Activated T-helper 1 cell treated with anti-CD3 and anti-CD28 coated beads, Interleukin-12 subunit alpha, Interleukin-12 subunit beta, Interleukin-2, Interleukin-4 antibody, amounts not matched to agents 30 ng/mL and 10 ng/mL and 1 ng/mL, durations not matched to agents 14 hours and 24 hours and 36 hours (primary cell): ENCODE measurements at regions of chr9 and their contacts with region 1.

Region 1: DNA sequence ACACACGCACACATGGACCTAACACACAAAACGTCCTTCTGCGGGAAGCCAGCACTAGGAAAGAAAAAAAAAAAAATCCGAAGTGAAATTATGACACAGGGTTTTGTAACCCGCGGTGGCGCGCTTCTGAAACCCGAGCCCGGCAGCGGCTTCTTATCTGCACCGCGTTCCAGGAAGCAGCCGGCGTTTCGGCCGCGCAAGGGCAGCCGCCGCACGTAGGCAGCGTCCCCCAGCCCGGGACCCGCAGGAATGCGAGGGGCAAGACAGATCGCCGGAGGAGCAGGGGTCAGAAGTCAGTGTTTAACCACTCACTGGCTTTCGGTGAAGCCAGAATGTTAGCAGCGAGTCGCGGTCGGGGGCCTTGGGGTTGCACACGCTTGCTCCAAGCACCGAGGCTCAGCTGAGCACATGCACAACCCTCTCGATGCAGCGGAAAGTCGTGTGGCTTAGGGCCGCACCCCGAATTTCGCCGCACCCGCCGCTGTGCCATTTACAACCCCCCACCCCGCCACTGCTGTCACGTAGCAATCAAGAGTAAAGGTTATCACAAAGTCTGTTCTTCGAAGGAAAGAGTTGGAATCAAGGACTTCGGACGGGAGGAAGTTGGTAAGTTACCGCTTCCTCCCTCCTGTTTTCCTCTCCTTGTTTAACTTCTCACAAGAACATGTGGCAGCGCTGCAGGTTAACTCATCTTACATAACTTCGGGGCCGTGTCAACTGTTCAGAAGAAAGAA is 167.9 kb downstream of the AUH start:
- DNase-seq: peak; percentile 77
- H3K4me3 Mint-ChIP-seq: peak overlapping the region; percentile 71
- H3K27ac Mint-ChIP-seq: peak overlapping the region; percentile 95
- H3K4me1 Mint-ChIP-seq: peaks cover 80% of the 10 kb centered on the region
- H3K27me3 Mint-ChIP-seq: no peaks in the 10 kb centered on the region

Region 2: GRCh38 chr9:90827181-90827871 is 366.5 kb before region 1 on chr9:
- intact Hi-C with region 1: no loop called
- DNase-seq: no peak
- H3K4me3 Mint-ChIP-seq: no peak overlapping the region
- H3K27ac Mint-ChIP-seq: no peak overlapping the region
- H3K4me1 Mint-ChIP-seq: no peaks in the 10 kb centered on the region
- H3K27me3 Mint-ChIP-seq: peaks cover 17% of the 10 kb centered on the region

Region 3: DNA sequence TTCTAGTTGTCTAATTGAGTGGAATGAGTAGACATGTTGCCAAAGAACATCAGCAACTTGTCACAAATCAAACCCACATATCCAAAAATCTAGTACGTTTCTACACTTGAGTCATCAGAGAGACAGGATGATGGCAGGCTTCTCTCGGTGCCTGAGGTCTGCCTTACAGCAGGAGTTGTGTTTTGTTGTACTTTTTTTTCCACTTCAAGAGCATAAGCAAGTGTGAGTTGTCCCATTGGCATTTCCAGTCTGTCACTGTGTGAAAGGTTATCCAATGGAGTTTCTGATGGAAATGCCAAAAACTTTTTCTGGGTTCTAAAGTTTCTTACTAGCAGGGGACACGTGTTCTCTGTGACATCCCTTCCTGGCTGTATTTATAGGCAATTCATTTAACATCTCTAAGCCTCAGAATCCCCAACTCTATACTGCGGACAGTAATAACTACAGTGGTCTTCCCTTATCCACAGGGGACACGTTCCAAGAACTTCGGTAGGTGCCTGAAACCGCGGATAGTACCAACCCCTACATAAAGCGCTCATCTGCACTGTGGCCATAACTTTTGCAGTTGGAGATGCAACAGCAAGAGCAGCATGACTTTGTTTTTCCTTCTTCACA is 145.7 kb before region 1 on chr9:
- intact Hi-C with region 1: loop called (anchors 1 kb)
- DNase-seq: peak; percentile 31
- H3K4me3 Mint-ChIP-seq: peak overlapping the region; percentile 65
- H3K27ac Mint-ChIP-seq: peak overlapping the region; percentile 92
- H3K4me1 Mint-ChIP-seq: peaks cover 67% of the 10 kb centered on the region
- H3K27me3 Mint-ChIP-seq: peaks cover 4% of the 10 kb centered on the region

Region 4: DNA sequence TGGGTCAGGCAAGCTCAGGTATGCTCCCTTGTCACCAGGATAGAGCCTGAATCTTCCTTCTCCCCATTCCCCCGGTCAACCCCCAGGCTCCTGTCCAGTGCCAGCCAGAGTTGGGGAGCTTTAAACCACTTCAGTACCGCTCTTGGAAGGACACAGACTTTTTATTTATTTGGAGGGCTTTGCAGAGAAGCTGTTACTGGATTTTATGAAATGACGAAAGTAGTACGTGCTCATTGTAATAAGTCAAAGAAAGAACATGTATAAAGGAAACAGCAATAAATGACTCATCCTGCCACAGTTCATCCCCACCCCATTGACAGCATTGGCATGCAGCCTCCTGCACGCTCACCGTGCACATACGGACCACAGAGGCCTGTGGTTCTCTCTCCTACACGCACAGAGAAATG is 62.4 kb before region 1 on chr9:
- intact Hi-C with region 1: loop called (anchors 1 kb)
- DNase-seq: peak; percentile 70
- H3K4me3 Mint-ChIP-seq: peak overlapping the region; percentile 63
- H3K27ac Mint-ChIP-seq: peak overlapping the region; percentile 96
- H3K4me1 Mint-ChIP-seq: peaks cover 42% of the 10 kb centered on the region
- H3K27me3 Mint-ChIP-seq: no peaks in the 10 kb centered on the region

Region 5: GRCh38 chr9:91207729-91208418 is 14.0 kb after region 1 on chr9:
- intact Hi-C with region 1: loop called (anchors 1 kb)
- DNase-seq: no peak
- H3K4me3 Mint-ChIP-seq: peak overlapping the region; percentile 68
- H3K27ac Mint-ChIP-seq: peak overlapping the region; percentile 95
- H3K4me1 Mint-ChIP-seq: peaks cover 59% of the 10 kb centered on the region
- H3K27me3 Mint-ChIP-seq: no peaks in the 10 kb centered on the region

Region 6: GRCh38 chr9:91334053-91334452 is 140.2 kb after region 1 on chr9:
- intact Hi-C with region 1: no loop called
- DNase-seq: no peak
- H3K4me3 Mint-ChIP-seq: no peak overlapping the region
- H3K27ac Mint-ChIP-seq: no peak overlapping the region
- H3K4me1 Mint-ChIP-seq: no peaks in the 10 kb centered on the region
- H3K27me3 Mint-ChIP-seq: no peaks in the 10 kb centered on the region

Region 7: DNA sequence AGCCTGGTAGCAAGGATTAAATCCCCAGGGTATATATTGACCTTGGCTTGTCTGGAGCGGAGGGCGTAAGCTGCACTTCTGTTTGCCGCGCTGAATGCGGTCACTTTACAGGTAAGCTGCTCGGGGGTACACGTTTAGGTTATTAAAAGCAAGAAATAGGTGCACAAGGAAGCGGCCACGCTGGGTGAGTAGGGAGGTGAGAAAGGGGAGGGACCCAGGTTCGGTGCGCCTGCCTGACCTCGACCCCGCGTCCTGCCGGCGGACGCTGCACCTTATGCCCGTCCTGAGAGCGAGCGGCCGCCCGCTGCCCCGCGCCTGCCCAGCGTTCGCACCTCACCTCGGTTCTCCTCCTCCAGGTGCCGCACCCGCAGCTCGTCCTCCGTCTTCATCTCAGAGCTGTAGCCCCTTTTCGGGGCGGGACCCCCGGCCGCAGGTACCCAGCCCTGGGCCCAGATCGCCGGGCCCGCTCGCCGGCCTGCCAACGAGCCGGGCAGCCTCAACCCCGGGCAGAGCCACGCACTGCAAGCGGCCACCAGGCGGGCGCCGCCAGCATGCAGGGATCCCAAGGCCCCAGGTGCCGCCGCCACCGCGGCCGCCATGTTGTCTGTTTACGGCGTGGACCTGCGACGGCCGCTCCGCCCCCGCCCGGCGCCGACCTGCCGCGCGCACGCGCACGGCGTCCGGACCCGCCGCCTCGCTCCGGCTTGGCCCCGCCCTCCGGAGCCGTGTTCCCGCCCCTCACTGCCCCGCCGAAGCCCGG is 167.6 kb after region 1 on chr9 and contains the start of gene AUH:
- intact Hi-C with region 1: loop called (anchors 1 kb)
- DNase-seq: peak; percentile 85
- H3K4me3 Mint-ChIP-seq: peak within 1 kb of the TSS; percentile 97
- H3K27ac Mint-ChIP-seq: peak within 1 kb of the TSS; percentile 94
- H3K4me1 Mint-ChIP-seq: peaks cover 48% of the 10 kb centered on the region
- H3K27me3 Mint-ChIP-seq: no peaks in the 10 kb centered on the region
- total RNA-seq, gene AUH: 50.4 and 53.3 TPM in 2 replicates